ENCODE measurements at regions of chr5 and their contacts with region 1.

Region 1: DNA sequence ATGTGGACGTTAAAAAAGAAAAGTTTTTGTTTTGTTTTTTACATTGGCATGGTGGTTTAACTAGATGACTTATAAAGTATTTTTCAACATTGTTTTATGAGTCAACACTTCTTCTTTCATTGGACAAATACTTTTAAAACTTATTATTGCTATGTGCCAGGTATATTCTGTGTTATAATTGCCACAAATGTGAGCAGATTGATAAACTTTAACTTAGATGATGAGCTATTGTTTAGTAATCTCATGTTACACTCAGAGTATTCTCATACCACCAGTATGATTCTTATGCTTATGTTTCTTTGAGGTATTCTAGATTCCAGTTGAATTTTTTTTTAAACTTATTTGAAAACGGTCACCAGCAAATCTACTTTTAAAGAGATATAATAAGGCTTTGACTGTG is 60.3 kb downstream of the RASA1 start:
- DNase-seq: no peak
- ATAC-seq: no peak
- H3K4me3 ChIP-seq: no peak overlapping the region
- H3K27ac ChIP-seq: no peak overlapping the region
- H3K4me1 ChIP-seq: no peaks in the 10 kb centered on the region; the same call in 1 of the 2 replicates
- H3K27me3 ChIP-seq: no peaks in the 10 kb centered on the region
- CTCF ChIP-seq: no peak

Region 2: DNA sequence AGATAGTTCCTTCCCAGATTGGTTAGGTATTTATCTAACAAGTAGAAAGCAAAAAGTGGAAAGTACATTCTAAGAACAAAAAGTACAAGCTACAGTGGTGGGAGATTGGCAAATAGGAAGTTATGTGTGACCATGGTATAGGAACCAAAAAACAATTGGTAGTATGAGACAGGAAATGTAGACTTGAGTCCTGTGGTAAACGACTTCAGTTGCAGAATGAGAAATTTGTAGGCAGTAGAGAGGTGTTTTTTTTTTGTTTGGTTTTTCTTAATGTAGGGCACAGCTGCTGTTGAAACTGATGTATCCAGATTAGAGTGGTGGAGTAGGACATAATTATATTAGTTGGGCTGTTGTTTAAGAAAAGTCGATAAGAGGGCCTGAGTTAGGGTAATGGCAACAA is 12.7 kb after region 1 on chr5:
- CTCF ChIA-PET with region 1: no interaction called
- POLR2A ChIA-PET with region 1: no interaction called
- in situ Hi-C with region 1: no loop called
- intact Hi-C with region 1: no loop called
- DNase-seq: no peak
- ATAC-seq: no peak
- H3K4me3 ChIP-seq: no peak overlapping the region
- H3K27ac ChIP-seq: no peak overlapping the region
- H3K4me1 ChIP-seq: no peaks in the 10 kb centered on the region
- H3K27me3 ChIP-seq: no peaks in the 10 kb centered on the region
- CTCF ChIP-seq: no peak

Region 3: GRCh38 chr5:87398981-87399616 is 71.1 kb after region 1 on chr5:
- CTCF ChIA-PET with region 1: no interaction called
- POLR2A ChIA-PET with region 1: interaction called, 13 read pairs
- in situ Hi-C with region 1: no loop called
- intact Hi-C with region 1: no loop called
- DNase-seq: no peak
- ATAC-seq: no peak
- H3K4me3 ChIP-seq: no peak overlapping the region
- H3K27ac ChIP-seq: no peak overlapping the region
- H3K4me1 ChIP-seq: no peaks in the 10 kb centered on the region
- H3K27me3 ChIP-seq: no peaks in the 10 kb centered on the region
- CTCF ChIP-seq: no peak